ENCODE measurements at regions of chr2 and their contacts with region 1.

Region 1: DNA sequence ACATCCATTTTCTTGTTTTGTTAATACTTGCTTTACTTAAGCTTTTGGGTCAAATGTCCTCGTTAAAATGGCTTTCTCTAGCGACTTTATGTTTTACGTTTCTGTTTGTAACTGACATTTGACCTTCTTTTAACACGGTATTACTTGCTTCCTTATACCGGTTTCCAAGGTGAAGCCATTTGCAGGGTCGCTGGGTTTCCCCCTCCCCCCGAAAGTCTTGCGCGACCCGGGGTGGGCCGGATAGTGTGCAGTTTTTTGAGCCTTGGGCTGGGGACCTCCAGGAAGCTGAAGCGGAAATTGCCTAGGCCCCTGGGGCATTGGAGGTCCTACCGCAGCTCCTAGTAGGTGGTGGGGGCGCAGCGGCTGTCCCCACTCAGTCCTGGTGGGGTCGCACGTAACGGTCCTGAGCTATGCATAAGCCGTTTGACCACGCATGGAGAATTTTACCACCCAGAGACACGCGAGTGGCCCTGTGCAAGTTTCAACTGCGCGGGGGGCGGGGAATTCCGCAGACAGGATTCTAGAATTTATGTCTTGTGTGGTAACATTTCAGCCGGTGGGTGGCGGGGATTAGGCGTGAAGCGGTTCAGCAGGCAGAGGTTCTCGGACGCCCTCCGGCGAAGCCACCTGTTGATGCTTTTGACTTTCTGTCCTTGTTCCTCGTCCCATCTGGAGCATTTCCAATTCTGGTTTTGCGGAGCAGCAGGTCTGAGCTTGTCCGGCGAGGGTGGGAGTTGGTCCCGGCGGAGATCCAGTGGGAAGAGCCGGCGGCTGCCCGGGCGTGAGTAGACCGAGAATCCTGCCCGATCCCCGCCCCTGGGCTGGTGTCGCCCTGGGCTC is 2.4 kb downstream of the CFLAR start:
- DNase-seq: peak; percentile 77 to 87
- H3K4me3 ChIP-seq: peak overlapping the region; percentile 68
- H3K27ac ChIP-seq: peak overlapping the region; percentile 100
- H3K4me1 ChIP-seq: peaks cover 59% of the 10 kb centered on the region
- H3K27me3 ChIP-seq: no peaks in the 10 kb centered on the region
- CTCF ChIP-seq: peak; percentile 56; the same call in 1 of the 2 replicates

Region 2: DNA sequence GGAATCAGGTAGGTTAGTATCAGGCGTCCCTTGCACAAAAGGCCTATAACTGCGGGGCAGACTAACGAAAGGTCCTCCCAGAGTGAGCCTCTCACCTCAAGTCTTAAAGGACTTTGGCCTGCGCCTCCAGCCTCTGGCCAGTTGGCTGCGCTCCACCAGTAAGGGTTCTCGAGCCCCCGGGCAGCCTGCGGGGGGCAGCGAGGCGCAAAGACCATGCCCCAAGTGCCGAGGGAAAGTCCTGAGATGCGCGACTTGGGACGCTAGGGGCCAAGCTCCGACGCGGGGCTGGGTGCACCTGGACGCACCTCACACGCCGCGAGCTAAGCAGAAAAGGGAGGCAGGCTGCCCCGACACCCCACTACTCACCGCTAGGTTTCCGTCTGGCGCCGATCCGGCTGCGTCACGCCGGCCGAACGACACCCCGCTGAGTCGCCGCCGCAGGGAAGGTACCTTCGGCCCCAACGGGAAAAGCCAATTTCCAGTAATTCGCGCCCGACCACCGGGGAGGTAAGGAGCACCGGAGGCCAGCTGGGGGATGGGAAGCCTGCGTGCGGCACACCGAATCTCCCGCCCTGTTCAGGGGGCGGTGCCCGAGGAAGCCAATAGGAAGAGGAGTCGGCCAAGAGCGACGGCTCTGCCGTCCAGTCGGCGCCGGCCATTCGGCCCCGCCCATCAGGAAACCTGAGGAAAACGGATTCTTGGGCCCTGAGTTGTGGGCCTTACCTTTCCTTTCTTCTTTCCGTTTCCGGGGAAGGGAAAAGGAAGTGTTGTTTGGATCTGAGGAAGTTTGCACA is 155.0 kb before region 1 on chr2 and contains the start of gene ORC2:
- CTCF ChIA-PET with region 1: no interaction called
- POLR2A ChIA-PET with region 1: no interaction called
- intact Hi-C with region 1: loop called (anchors 5 kb)
- DNase-seq: peak; percentile 87 to 96
- H3K4me3 ChIP-seq: peak within 1 kb of the TSS; percentile 95
- H3K27ac ChIP-seq: peak within 1 kb of the TSS; percentile 76
- H3K4me1 ChIP-seq: peaks cover 51% of the 10 kb centered on the region
- H3K27me3 ChIP-seq: no peaks in the 10 kb centered on the region
- CTCF ChIP-seq: peak; percentile 65; the same call in 1 of the 2 replicates
- total RNA-seq, gene ORC2: 34.0 and 43.3 TPM in 2 replicates

Region 3: GRCh38 chr2:201151127-201151981 is 33.0 kb after region 1 on chr2:
- CTCF ChIA-PET with region 1: interaction called, 4 read pairs
- POLR2A ChIA-PET with region 1: interaction called, 5 read pairs
- intact Hi-C with region 1: loop called (anchors 1 kb)
- DNase-seq: peak in 1 of 2 experiments; percentile 87
- H3K4me3 ChIP-seq: peak overlapping the region; percentile 23; the same call in 1 of the 2 replicates
- H3K27ac ChIP-seq: peak overlapping the region; percentile 97
- H3K4me1 ChIP-seq: peaks cover 46% of the 10 kb centered on the region
- H3K27me3 ChIP-seq: no peaks in the 10 kb centered on the region
- CTCF ChIP-seq: no peak

Region 4: GRCh38 chr2:201158111-201158929 is 40.0 kb after region 1 on chr2:
- CTCF ChIA-PET with region 1: interaction called, 6 read pairs
- POLR2A ChIA-PET with region 1: no interaction called
- intact Hi-C with region 1: loop called (anchors 2 kb)
- DNase-seq: peak; percentile 57 to 63
- H3K4me3 ChIP-seq: no peak overlapping the region
- H3K27ac ChIP-seq: no peak overlapping the region
- H3K4me1 ChIP-seq: no peaks in the 10 kb centered on the region
- H3K27me3 ChIP-seq: no peaks in the 10 kb centered on the region
- CTCF ChIP-seq: peak; percentile 76

Measured in PC-9 (cell line).